ENCODE measurements at regions of chr18 and their contacts with region 1.

Region 1: GRCh38 chr18:48445540-48445939 is 36.4 kb upstream of the ZBTB7C start:
- ATAC-seq: peak in 6 of 8 experiments; percentile 21 to 84 (median 65)
- H3K4me3 ChIP-seq: no peak overlapping the region
- H3K27ac ChIP-seq: no peak overlapping the region
- H3K4me1 ChIP-seq: peaks cover 8 to 13% of the 10 kb centered on the region in 2 donors

Region 2: GRCh38 chr18:48022531-48023329 is 422.8 kb before region 1 on chr18:
- in situ Hi-C with region 1: loop called in 2 of 9 experiments (anchors 10 to 25 kb)
- ATAC-seq: peak; percentile 31 to 88 (median 58)
- H3K4me3 ChIP-seq: no peak overlapping the region
- H3K27ac ChIP-seq: peak overlapping the region; percentile 89 to 92
- H3K4me1 ChIP-seq: peaks cover 35% of the 10 kb centered on the region in 2 donors

Region 3: DNA sequence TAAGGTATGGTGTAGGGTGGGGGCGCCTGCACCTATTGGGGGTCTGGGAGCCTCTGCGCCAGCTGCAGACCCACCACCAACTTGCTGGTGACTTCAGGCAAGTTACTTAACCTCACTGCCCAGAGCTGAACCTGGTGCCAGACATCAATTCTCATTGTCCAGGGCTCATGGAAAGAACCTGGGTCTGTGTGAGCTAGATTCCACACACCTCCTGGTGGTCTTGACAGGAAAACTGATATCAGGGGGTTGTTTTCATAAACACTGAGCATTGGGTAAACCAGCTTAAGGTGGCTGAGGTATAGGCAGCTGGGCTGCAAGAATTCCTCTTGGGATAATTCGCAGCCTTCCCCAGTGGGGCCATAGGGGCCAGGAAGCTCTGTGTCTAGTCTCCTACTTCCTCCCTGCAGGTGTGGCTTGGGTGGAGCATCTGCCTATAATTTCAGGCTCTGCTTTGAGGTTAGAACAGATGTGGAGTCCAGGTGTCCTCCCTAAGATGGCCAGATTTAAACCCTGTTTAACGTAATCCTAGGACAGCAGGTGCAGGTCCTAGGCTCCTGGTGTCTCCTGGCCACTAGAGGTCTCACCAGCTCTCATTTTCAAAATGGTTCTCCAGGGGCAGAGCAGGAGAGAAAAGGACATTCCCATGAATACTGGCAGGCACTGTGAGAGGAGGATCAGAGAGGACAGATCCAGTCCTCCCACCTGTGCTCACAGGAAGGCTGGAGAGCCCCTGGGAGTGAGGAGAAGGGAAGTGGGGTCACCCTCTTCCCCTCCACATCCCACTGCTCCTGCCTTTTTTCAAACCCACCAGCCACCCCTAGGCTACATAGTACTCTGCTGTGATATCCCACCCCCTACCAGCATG is 414.7 kb before region 1 on chr18:
- in situ Hi-C with region 1: loop called in 8 of 9 experiments (anchors 5 to 25 kb)
- ATAC-seq: peak; percentile 63 to 97 (median 90)
- H3K4me3 ChIP-seq: no peak overlapping the region
- H3K27ac ChIP-seq: no peak overlapping the region
- H3K4me1 ChIP-seq: peaks cover 9 to 20% of the 10 kb centered on the region in 2 donors

Region 4: DNA sequence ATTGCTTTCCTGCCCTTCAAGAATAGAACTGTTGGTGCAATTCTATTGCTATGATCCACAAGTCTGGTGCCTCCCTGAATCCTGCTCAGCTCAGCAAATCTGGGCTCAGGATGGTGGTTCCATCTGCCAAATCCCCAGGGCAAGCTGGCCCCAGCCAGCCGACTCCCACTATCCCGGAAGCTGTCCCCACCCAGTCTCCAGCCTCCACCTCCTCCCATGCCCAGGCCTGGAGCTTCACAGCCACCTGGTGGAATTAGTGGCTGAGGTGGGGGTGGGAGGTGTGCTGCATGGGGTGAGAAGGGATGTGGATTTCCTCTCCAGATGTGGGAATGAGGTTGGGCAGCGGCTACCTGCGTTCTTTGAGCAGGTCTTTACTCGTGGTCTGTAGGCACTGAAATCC is 395.8 kb before region 1 on chr18:
- in situ Hi-C with region 1: loop called in 2 of 9 experiments (anchors 10 to 25 kb)
- ATAC-seq: peak in 3 of 8 experiments; percentile 28 to 74 (median 44)
- H3K4me3 ChIP-seq: no peak overlapping the region
- H3K27ac ChIP-seq: no peak overlapping the region
- H3K4me1 ChIP-seq: peaks cover 8 to 9% of the 10 kb centered on the region in 2 donors

Region 5: GRCh38 chr18:48222118-48222517 is 223.4 kb before region 1 on chr18:
- in situ Hi-C with region 1: loop called in 4 of 9 experiments (anchors 25 kb)
- ATAC-seq: peak; percentile 54 to 94 (median 88)
- H3K4me3 ChIP-seq: no peak overlapping the region
- H3K27ac ChIP-seq: no peak overlapping the region
- H3K4me1 ChIP-seq: peaks cover 5 to 14% of the 10 kb centered on the region in 2 donors

Region 6: DNA sequence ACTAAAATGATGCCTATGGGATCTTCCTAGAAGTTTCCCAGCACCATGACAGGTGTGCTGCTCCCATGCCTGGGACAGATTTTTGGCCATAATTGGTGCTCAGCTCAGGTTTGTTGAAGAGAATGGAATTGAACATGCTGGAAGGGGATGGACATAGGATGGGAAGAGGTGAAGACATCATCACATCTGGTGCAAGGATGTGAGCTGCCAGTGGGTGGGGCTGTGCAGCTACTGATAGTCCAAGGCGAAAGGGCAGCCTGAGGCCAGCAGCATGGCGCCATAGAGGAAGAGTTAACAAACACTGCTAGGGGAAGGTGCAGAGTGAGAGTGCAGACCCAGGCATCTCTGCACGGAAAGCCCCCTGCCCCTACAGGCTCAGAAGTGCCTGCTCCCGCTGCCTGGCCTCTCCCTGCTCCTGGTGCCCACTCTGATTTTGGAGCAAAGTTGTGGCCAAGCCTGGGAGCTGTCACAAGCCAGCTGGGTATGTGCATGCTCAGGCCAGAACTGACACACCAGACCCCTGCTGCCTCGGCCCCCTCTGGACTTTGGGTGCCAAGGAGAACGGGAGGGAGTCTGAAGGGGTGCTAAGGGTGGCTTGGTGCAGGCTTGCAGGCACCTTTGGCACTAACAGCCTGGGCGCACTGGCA is 214.9 kb before region 1 on chr18:
- in situ Hi-C with region 1: loop called in 3 of 9 experiments (anchors 25 kb)
- ATAC-seq: peak; percentile 86 to 99 (median 90)
- H3K4me3 ChIP-seq: no peak overlapping the region
- H3K27ac ChIP-seq: no peak overlapping the region
- H3K4me1 ChIP-seq: peaks cover 2 to 9% of the 10 kb centered on the region in 2 donors

Region 7: DNA sequence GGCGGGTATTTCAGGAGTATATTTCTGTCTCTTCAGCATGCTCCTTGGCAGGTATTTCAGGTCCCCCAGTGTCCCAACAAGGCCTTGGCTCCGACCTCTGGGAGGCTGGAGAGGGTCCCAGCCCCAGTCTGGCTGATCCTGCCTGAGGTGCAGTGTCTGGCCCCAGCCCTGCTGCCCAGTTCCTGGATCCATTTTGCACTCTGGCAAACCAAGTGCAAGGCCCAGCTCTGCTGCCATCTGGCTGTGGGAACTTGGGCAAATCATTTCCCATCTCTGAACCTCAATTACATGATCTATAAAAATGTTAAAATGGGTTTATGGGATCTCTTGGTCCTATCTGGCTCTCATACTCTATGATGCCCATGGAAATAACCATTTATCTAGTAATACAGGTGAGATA is 99.9 kb before region 1 on chr18:
- in situ Hi-C with region 1: loop called in 1 of 9 experiments (anchors 10 kb)
- ATAC-seq: peak in 1 of 8 experiments; percentile 38
- H3K4me3 ChIP-seq: no peak overlapping the region
- H3K27ac ChIP-seq: no peak overlapping the region
- H3K4me1 ChIP-seq: peaks cover 26 to 33% of the 10 kb centered on the region in 2 donors

Region 8: GRCh38 chr18:48367557-48367956 is 78.0 kb before region 1 on chr18:
- in situ Hi-C with region 1: no loop called
- ATAC-seq: no peak
- H3K4me3 ChIP-seq: no peak overlapping the region
- H3K27ac ChIP-seq: no peak overlapping the region
- H3K4me1 ChIP-seq: peaks cover 0 to 4% of the 10 kb centered on the region in 2 donors